Activated CD4-positive, alpha-beta memory T cell treated with anti-CD3 and anti-CD28 coated beads, Interleukin-2, amount 10 ng/mL, durations not matched to agents 7 days and 5 days (primary cell): ENCODE measurements at regions of chr20 and their contacts with region 1.

Region 1: GRCh38 chr20:57398231-57398821 is 7.1 kb downstream of the RBM38 start:
- DNase-seq: peak; percentile 87
- H3K4me3 Mint-ChIP-seq: peak overlapping the region; percentile 78
- H3K27ac Mint-ChIP-seq: peak overlapping the region; percentile 97
- H3K4me1 Mint-ChIP-seq: peaks cover 91% of the 10 kb centered on the region
- H3K27me3 Mint-ChIP-seq: no peaks in the 10 kb centered on the region

Region 2: GRCh38 chr20:57383447-57384347 is 14.6 kb before region 1 on chr20:
- CTCF ChIA-PET with region 1: interaction called, 25 read pairs
- POLR2A ChIA-PET with region 1: interaction called, 46 read pairs
- DNase-seq: no peak
- H3K4me3 Mint-ChIP-seq: no peak overlapping the region
- H3K27ac Mint-ChIP-seq: no peak overlapping the region
- H3K4me1 Mint-ChIP-seq: peaks cover 42% of the 10 kb centered on the region
- H3K27me3 Mint-ChIP-seq: no peaks in the 10 kb centered on the region

Region 3: DNA sequence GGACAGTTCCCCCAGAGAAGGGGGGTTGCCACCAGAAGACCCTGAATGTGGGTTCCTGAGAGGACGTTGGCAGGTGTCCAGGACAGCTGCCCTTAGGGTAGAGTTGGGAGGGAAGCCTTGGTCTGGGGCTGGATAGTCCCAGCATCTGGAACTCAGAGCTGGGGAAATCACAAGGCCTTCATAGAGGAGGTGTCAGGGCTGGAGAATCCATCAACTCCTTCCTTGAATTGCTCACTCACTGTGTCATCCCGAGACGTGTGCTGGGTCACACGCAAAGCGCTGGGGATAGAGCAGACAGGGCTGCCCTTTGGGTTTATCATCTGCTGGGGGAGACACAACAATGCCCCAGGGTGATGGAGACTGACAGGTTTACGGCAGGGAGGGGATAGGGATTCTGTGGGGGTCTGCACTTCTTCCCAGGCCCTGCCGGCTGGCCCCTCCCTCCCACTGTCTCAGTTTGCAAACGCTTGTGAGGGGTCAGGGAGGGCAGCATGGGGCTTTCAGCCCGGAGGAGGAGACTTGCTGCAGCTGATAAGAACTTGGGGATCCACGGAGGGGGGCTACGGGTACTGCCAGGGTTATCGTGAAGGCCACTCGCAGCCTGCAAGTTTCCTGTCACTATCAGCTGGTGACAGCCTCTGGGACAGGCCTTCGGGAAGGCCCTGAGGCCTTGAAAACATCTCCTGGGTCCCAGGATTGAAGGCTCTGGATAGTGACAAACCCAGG is 11.5 kb after region 1 on chr20:
- CTCF ChIA-PET with region 1: interaction called, 3 read pairs
- POLR2A ChIA-PET with region 1: interaction called, 24 read pairs
- DNase-seq: no peak
- H3K4me3 Mint-ChIP-seq: no peak overlapping the region
- H3K27ac Mint-ChIP-seq: no peak overlapping the region
- H3K4me1 Mint-ChIP-seq: peaks cover 20% of the 10 kb centered on the region
- H3K27me3 Mint-ChIP-seq: no peaks in the 10 kb centered on the region

Region 4: DNA sequence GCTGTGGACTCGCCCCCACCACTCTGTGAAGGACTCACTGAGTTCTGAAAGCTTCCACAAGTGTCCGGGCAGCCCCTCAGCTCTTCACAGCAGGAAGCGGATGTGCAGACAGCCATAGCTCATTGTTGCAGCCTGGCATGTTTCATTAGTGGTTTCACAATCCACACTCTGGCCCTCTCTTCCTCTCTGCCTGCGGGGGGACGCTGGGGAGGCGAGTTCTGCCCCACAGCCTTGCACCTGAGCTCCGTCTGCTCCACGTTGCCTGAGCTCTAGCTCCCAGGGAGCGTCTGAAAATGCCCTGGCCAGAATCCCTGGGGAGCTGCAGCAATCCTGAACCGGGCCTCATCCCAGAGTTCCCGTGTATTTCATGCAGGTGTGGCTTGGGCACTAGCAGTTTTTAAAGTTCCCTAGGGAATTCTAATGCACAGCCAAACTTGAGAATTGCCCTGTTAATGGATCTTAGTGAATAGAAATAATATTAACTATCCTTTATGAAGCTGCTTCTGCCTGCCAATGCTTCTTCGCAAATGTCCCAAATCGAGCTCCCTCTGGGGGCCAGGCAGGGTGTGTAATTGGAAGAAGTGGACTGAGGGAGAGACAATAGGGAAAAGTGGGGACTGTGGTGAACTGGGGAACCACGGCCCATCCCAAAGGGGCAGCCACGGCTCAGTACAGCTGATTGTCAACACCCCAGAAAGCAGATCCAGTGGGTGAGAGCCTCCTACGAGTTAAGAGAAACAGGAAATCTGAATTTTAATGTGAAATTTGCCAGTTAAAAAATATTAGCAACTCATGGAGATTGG is 75.1 kb after region 1 on chr20:
- CTCF ChIA-PET with region 1: interaction called, 6 read pairs
- POLR2A ChIA-PET with region 1: interaction called, 10 read pairs
- DNase-seq: peak; percentile 30
- H3K4me3 Mint-ChIP-seq: no peak overlapping the region
- H3K27ac Mint-ChIP-seq: no peak overlapping the region
- H3K4me1 Mint-ChIP-seq: peaks cover 15% of the 10 kb centered on the region
- H3K27me3 Mint-ChIP-seq: peaks cover 8% of the 10 kb centered on the region